ENCODE measurements at regions of chr20 and their contacts with region 1.

Region 1: GRCh38 chr20:8722276-8722928 is 346.5 kb upstream of the PLCB4 start:
- DNase-seq: no peak

Region 2: DNA sequence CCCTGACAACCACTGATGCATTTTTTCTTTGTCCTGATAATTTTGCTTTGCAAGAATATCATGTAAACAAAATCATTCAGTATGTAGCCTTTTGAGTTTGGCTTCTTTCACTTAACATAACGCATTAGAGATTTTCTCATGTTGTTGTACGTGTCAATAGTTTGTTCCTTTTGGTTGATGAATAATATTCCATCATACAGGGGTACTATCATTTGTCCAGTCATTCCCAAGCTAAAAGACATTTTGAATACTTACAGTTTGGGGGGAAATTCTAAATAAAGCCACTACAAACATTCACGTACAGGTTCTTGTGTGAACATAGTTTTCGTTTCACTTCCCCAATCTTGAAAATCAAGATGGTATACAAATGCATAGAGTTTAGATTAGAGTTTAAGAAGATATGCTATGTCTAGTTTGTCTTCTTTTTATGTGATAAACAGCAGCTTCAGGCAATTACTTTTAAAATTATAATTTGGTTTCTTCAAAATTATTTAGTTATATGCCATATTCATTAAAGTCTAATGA is 787.3 kb before region 1 on chr20:
- intact Hi-C with region 1: loop called (anchors 5 kb)
- DNase-seq: no peak

Region 3: GRCh38 chr20:8043687-8044282 is 678.6 kb before region 1 on chr20:
- intact Hi-C with region 1: loop called (anchors 2 kb)
- DNase-seq: no peak

Region 4: GRCh38 chr20:8527998-8528723 is 194.2 kb before region 1 on chr20:
- intact Hi-C with region 1: loop called (anchors 10 kb)
- DNase-seq: no peak

Measured in cardiac septum (tissue), 1 donor.